T-cell (primary cell): ENCODE measurements at regions of chr9 and their contacts with region 1.

Region 1: DNA sequence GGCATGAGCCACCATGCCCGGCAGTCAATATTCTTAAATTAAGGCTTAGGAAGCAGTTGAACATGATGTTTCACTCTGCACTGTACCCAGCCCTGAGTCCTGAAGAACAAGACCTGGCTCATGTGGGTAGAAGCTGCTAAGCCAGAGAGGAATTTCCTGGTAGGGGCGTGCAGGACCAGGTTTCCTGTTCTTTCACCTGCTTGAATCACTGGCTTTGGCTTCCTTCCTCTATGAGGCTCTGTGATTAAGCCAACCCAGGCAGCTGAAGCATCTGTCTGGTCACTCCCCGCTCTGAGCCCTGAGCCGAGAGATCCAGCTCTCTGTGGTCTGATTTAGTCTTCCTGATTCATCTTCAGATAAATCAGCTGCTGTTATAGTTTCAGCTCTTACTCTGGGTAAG is 29.1 kb downstream of the CFAP77 start:
- DNase-seq: no peak
- ATAC-seq: no peak
- H3K4me3 ChIP-seq: no peak overlapping the region
- H3K4me3 Mint-ChIP-seq: no peak overlapping the region
- H3K27ac ChIP-seq: no peak overlapping the region
- H3K27ac Mint-ChIP-seq: no peak overlapping the region
- H3K4me1 ChIP-seq: no peaks in the 10 kb centered on the region
- H3K4me1 Mint-ChIP-seq: no peaks in the 10 kb centered on the region
- H3K27me3 ChIP-seq: peaks cover 5 to 32% of the 10 kb centered on the region in 2 experiments
- H3K27me3 Mint-ChIP-seq: peaks cover 44 to 60% of the 10 kb centered on the region in 2 donors

Region 2: DNA sequence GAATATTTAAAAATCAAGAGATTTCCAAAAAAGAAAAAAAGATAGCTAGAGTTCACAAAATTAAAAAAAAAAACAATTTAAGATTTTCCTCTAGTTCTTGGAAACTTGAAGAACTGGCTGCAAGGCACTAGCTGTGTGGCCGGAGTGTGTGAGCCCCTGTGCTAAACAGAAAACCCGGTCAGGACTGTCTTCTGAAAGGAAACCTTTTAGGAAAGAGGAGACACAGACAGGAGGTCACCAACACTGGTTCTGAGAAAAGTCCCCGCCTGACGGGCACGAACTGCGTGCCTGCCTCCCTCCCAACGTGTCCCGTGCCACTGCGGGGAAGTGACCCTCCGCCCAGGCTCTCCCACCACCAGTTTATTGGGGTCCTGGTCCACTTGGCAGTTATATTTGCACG is 47.7 kb before region 1 on chr9:
- CTCF ChIA-PET with region 1: no interaction called
- POLR2A ChIA-PET with region 1: interaction called in 1 of 2 experiments, 12 read pairs
- DNase-seq: no peak
- ATAC-seq: no peak
- H3K4me3 ChIP-seq: no peak overlapping the region
- H3K4me3 Mint-ChIP-seq: no peak overlapping the region
- H3K27ac ChIP-seq: no peak overlapping the region
- H3K27ac Mint-ChIP-seq: no peak overlapping the region
- H3K4me1 ChIP-seq: no peaks in the 10 kb centered on the region
- H3K4me1 Mint-ChIP-seq: no peaks in the 10 kb centered on the region
- H3K27me3 ChIP-seq: no peaks in the 10 kb centered on the region
- H3K27me3 Mint-ChIP-seq: no peaks in the 10 kb centered on the region

Region 3: DNA sequence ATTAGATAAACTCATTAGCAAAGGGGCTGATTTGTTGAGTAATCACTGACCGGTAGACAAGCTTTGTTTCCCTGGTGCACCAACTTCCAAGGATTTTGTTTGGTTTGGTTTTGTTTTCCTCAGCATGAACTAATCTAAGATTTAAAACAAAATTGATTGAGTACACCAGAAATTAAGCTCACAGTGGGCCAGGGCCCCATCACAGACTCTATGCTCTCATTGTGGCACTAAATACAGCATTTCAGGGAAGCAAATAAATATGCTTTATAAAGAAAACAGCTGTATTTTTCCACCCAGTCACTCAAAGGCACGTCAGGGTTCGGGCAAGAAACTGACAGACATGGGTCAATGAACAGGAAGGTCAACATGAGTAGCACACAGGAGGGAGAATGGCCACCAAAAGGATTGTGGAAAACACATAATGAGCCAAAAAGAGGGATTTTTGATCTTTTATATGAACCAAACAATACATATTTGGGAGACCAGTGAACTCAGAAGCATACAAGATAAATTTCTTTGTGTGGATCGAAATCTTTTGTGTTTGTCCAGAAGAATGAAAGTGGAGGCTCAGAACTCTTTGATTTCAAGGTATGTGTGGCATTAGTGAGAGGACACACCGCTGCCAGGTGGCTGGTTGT is 20.3 kb before region 1 on chr9:
- CTCF ChIA-PET with region 1: interaction called in 1 of 2 experiments, 3 read pairs
- POLR2A ChIA-PET with region 1: interaction called in 1 of 2 experiments, 11 read pairs
- DNase-seq: no peak
- ATAC-seq: no peak
- H3K4me3 ChIP-seq: no peak overlapping the region
- H3K4me3 Mint-ChIP-seq: no peak overlapping the region
- H3K27ac ChIP-seq: no peak overlapping the region
- H3K27ac Mint-ChIP-seq: no peak overlapping the region
- H3K4me1 ChIP-seq: no peaks in the 10 kb centered on the region
- H3K4me1 Mint-ChIP-seq: no peaks in the 10 kb centered on the region
- H3K27me3 ChIP-seq: peaks cover 4 to 63% of the 10 kb centered on the region in 2 experiments
- H3K27me3 Mint-ChIP-seq: peaks cover 59 to 67% of the 10 kb centered on the region in 2 donors

Region 4: GRCh38 chr9:132458432-132458831 is 19.3 kb after region 1 on chr9:
- CTCF ChIA-PET with region 1: no interaction called
- POLR2A ChIA-PET with region 1: no interaction called
- DNase-seq: no peak
- ATAC-seq: no peak
- H3K4me3 ChIP-seq: no peak overlapping the region
- H3K4me3 Mint-ChIP-seq: no peak overlapping the region
- H3K27ac ChIP-seq: no peak overlapping the region
- H3K27ac Mint-ChIP-seq: no peak overlapping the region
- H3K4me1 ChIP-seq: no peaks in the 10 kb centered on the region
- H3K4me1 Mint-ChIP-seq: no peaks in the 10 kb centered on the region
- H3K27me3 ChIP-seq: peaks cover 0 to 46% of the 10 kb centered on the region in 2 experiments
- H3K27me3 Mint-ChIP-seq: peaks cover 12 to 16% of the 10 kb centered on the region in 2 donors

Region 5: DNA sequence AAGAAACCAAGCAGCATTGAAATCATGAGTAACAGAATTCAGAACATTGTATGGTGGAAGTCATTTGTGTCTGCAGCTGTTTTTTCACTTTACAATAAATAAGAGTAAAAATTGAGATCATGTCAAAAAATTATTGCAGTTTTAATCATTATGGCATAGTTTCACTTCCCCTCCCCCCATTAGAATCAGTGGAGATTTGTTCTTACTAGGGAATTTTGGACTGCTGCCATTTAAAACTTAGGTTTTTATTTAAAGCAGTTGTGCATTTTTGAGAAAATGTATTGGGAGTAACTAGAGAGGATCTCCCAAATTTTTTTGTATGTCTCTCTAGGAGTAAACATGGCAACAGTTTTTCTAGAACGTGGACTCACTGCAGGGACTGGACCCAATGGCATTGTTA is 251.5 kb after region 1 on chr9:
- CTCF ChIA-PET with region 1: no interaction called
- POLR2A ChIA-PET with region 1: no interaction called
- DNase-seq: no peak
- ATAC-seq: no peak
- H3K4me3 ChIP-seq: no peak overlapping the region
- H3K4me3 Mint-ChIP-seq: no peak overlapping the region
- H3K27ac ChIP-seq: no peak overlapping the region
- H3K27ac Mint-ChIP-seq: no peak overlapping the region
- H3K4me1 ChIP-seq: peaks cover 0 to 2% of the 10 kb centered on the region in 2 experiments
- H3K4me1 Mint-ChIP-seq: peaks cover 0 to 5% (median 4%) of the 10 kb centered on the region in 3 donors
- H3K27me3 ChIP-seq: no peaks in the 10 kb centered on the region
- H3K27me3 Mint-ChIP-seq: no peaks in the 10 kb centered on the region